Transverse colon (tissue), 4 donors: ENCODE measurements at regions of chr4 and their contacts with region 1.

Region 1: GRCh38 chr4:67624939-67625338 is 66.4 kb downstream of the STAP1 start:
- DNase-seq: no peak
- H3K4me3 ChIP-seq: no peak overlapping the region
- H3K27ac ChIP-seq: no peak overlapping the region
- H3K4me1 ChIP-seq: no peaks in the 10 kb centered on the region
- H3K27me3 ChIP-seq: no peaks in the 10 kb centered on the region
- CTCF ChIP-seq: no peak
- EP300 ChIP-seq: no peak
- POLR2A ChIP-seq: no peak

Region 2: DNA sequence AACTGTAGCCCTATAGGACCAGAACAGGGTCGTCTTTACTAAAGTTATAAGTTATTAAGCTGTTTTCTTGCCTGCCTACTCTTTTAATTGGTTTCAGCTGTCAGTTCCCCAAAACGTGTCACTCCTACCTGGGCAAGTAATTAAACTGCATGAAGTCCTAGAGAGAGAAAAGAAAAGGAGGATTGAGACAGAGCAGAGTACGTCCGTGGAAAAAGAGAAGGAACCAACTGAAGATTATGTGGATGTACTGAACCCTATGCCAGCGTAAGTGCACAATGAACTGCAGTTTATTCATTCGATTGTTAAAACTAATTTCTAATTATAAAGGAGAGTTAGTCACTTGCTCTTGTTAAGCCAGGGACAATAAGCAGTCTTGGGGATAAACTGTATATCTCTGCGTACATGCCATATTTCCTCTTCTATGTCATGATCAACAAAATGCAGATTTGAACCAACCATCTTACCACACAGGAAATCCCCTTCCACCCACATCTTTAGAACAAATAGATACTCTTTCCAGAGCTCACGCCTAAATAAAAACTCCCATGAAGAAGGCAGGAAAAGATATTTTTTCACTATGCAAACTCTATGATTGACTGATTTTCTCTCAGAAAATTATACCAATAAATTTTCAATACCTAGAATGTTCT is 43.6 kb before region 1 on chr4:
- in situ Hi-C with region 1: no loop called
- intact Hi-C with region 1: loop called (anchors 1 kb)
- DNase-seq: no peak
- H3K4me3 ChIP-seq: no peak overlapping the region
- H3K27ac ChIP-seq: no peak overlapping the region
- H3K4me1 ChIP-seq: no peaks in the 10 kb centered on the region
- H3K27me3 ChIP-seq: no peaks in the 10 kb centered on the region
- CTCF ChIP-seq: no peak
- EP300 ChIP-seq: no peak
- POLR2A ChIP-seq: no peak

Region 3: GRCh38 chr4:68002906-68003305 is 378.0 kb after region 1 on chr4:
- in situ Hi-C with region 1: no loop called
- intact Hi-C with region 1: no loop called
- DNase-seq: no peak
- H3K4me3 ChIP-seq: no peak overlapping the region
- H3K27ac ChIP-seq: no peak overlapping the region
- H3K4me1 ChIP-seq: no peaks in the 10 kb centered on the region
- H3K27me3 ChIP-seq: no peaks in the 10 kb centered on the region
- CTCF ChIP-seq: no peak
- EP300 ChIP-seq: no peak
- POLR2A ChIP-seq: no peak